AG04450 (cell line): ENCODE measurements at regions of chr15 and their contacts with region 1.

Region 1: GRCh38 chr15:96416934-96417759 is 86.6 kb downstream of the NR2F2 start:
- DNase-seq: no peak
- H3K4me3 ChIP-seq: peak overlapping the region; percentile 31
- H3K27ac ChIP-seq: no peak overlapping the region
- H3K27me3 ChIP-seq: peaks cover 91% of the 10 kb centered on the region
- CTCF ChIP-seq: no peak

Region 2: GRCh38 chr15:96365781-96366525 is 51.2 kb before region 1 on chr15:
- CTCF ChIA-PET with region 1: no interaction called
- POLR2A ChIA-PET with region 1: no interaction called
- DNase-seq: no peak
- H3K4me3 ChIP-seq: no peak overlapping the region
- H3K27ac ChIP-seq: no peak overlapping the region
- H3K27me3 ChIP-seq: peaks cover 26% of the 10 kb centered on the region
- CTCF ChIP-seq: no peak

Region 3: DNA sequence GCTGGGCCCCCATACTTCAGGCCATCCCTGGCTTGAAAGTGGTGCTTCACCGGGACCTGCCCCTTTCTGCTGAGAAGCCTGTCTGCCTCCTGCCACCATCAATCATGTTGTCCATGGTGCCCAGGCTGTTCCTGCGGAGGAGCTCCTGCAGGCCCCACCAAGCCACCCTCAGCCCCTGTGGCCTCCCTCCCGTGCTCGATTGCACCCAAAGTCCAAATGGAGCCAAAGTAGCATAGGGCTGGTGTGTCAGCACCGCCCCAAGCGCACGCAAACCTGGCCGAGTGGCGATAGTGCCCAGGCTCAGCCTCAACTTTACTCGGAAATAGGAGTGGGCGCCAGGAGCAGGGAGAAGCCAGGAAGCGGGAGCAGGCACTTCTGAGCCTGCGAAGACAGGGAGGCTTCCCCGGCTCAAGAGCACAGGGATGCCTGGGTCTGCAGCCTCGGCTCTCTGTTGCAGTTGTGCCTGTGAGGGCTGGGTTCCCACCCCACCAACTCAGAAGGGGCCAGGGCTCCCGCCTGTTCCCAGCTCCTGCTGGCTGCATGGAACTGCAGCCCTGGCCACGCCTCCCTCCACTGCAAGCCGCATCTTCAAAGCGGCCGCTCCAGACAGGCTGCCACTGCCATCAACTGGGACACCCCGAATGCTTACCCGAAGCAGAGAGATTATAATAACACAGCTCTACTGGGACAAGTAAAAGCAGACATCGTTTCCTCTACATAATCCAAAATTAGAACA is 1746.3 kb after region 1 on chr15:
- CTCF ChIA-PET with region 1: no interaction called
- POLR2A ChIA-PET with region 1: interaction called, 11 read pairs
- DNase-seq: no peak
- H3K4me3 ChIP-seq: no peak overlapping the region
- H3K27ac ChIP-seq: no peak overlapping the region
- H3K27me3 ChIP-seq: no peaks in the 10 kb centered on the region
- CTCF ChIP-seq: no peak